SK-N-SH (cell line): ENCODE measurements at regions of chr7 and their contacts with region 1.

Region 1: GRCh38 chr7:786472-787255 is 45.6 kb upstream of the SUN1 start:
- DNase-seq: peak; percentile 95
- H3K4me3 ChIP-seq: no peak overlapping the region
- H3K27ac ChIP-seq: no peak overlapping the region
- H3K4me1 ChIP-seq: no peaks in the 10 kb centered on the region; a peak in 1 of 4 replicates
- H3K27me3 ChIP-seq: no peaks in the 10 kb centered on the region
- CTCF ChIP-seq: peak; percentile 98
- EP300 ChIP-seq: no peak
- RAD21 ChIP-seq: peak; percentile 92

Region 2: DNA sequence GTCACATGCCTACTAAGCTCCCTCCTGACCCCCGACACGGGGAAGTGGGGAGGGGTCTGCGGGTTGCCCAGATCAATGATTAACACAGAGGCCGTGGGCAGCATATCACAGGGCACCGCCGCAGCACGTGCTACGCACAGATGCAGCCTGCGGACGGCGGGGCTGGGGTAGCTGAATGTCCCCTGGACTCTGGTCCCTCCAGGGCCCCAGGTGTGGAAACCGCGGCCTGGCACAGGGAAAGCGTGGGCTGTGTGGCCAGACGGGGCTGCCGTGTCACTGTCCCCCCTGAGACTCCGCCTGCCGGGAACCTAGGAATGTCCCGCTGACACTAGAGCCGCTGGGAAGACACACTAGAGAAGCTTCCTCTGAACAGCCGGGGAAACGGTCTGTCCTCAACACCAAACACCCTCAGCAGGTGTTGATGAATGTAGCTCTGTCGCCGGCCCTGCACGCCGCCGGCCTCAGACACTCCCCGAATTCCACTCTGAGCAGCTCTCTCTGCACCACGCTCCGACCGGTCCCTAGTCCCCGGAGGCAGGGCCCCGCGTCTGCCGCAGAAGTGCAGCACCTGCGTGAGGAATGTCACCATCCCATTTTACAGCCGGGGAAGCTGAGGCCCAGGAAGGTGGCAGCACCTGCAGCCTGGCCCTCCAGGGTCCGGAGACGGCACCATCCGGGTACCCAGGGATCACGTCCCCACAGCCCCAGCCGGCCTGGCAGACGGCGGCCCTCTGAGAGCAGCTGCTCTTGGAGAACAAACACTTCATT is 233.6 kb before region 1 on chr7:
- CTCF ChIA-PET with region 1: no interaction called
- POLR2A ChIA-PET with region 1: no interaction called
- DNase-seq: no peak
- H3K4me3 ChIP-seq: no peak overlapping the region
- H3K27ac ChIP-seq: no peak overlapping the region
- H3K4me1 ChIP-seq: no peaks in the 10 kb centered on the region
- H3K27me3 ChIP-seq: no peaks in the 10 kb centered on the region
- CTCF ChIP-seq: no peak
- EP300 ChIP-seq: no peak
- RAD21 ChIP-seq: no peak

Region 3: DNA sequence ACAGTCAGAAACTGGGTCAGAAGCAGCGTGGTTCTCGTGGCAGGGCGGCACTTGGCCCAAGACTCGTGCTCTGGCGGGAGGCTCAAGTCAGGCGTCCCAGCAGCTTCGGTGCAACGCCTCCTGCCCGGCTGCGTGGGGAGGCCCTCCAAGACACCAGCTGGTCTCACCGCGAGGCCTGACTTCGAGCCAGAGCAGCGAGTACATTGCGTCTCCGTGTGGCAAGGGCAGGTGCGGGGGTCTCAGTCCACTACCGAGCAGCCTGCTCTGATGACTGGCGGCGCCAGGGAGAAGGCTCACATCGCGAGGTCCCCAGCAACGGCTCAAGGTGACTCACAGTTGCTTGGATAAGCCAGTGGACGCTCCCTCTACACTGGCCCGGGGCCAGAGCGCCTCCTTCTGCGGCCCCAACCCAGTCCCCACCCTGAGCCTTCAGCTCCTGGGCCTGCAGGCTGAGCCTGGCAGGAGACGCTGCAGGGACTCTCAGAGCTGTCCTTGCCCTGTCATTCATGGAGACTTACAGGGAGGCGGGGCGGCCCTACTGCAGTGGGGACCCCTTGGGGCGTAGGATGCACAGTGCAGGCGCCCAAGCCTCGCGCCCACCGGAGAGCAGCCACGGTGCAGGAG is 17.7 kb before region 1 on chr7:
- CTCF ChIA-PET with region 1: interaction called, 48 read pairs
- POLR2A ChIA-PET with region 1: no interaction called
- DNase-seq: peak; percentile 78
- H3K4me3 ChIP-seq: peak overlapping the region; percentile 52 to 55
- H3K27ac ChIP-seq: peak overlapping the region; percentile 90 to 98
- H3K4me1 ChIP-seq: peaks cover 21 to 45% of the 10 kb centered on the region in 2 experiments
- H3K27me3 ChIP-seq: no peaks in the 10 kb centered on the region
- CTCF ChIP-seq: peak; percentile 39
- EP300 ChIP-seq: no peak
- RAD21 ChIP-seq: peak; percentile 11; the same call in 1 of the 2 replicates

Region 4: DNA sequence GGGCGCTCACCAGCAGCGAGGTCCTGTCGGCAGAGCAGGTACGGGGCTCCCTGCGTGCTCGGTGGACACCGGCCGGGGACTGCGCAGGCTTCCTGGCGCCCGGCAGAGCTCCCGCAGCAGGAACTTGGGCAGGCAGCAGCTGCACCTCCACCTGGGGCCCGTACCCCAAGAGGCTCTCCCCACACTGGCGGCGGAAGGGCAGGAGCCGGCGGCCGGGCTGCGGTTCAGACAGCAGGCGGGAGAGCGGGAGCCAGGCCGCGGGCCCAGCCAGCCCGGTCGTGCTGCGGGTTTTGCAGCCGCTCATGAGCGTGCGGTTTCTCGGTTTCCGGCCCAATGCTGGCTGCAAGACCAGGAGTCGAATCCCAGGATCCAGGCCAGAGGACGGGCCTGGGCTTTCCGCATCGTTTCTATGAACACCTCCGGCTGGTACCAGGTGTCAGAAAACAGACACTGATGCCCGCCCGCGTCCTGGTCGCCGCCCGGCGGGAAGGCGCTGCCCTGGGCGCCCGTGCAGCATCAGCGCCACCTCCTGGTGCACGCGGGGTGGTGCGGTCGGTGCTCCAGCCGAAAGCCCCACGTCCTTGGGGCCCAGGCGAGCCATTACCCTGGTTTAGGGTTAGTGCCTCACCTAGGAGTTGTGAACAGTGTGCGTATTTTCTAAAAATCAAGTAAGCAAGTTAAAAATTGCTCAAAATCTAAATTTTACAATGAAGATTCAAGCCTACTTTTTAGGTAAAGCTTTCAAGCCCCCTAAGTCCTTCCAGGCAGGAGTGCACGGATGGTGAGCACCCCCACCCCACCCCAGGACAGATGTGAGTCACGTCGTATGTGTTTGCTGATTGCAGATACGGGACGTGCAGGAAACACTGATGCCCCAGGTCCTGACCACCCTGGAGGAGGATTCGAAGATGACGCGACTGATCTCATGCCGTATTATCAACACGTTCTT is 12.2 kb before region 1 on chr7:
- CTCF ChIA-PET with region 1: interaction called, 48 read pairs
- POLR2A ChIA-PET with region 1: no interaction called
- DNase-seq: peak; percentile 93
- H3K4me3 ChIP-seq: no peak overlapping the region
- H3K27ac ChIP-seq: no peak overlapping the region
- H3K4me1 ChIP-seq: peaks cover 40 to 48% of the 10 kb centered on the region in 2 experiments
- H3K27me3 ChIP-seq: no peaks in the 10 kb centered on the region
- CTCF ChIP-seq: peak; percentile 99
- EP300 ChIP-seq: no peak
- RAD21 ChIP-seq: peak; percentile 81

Region 5: DNA sequence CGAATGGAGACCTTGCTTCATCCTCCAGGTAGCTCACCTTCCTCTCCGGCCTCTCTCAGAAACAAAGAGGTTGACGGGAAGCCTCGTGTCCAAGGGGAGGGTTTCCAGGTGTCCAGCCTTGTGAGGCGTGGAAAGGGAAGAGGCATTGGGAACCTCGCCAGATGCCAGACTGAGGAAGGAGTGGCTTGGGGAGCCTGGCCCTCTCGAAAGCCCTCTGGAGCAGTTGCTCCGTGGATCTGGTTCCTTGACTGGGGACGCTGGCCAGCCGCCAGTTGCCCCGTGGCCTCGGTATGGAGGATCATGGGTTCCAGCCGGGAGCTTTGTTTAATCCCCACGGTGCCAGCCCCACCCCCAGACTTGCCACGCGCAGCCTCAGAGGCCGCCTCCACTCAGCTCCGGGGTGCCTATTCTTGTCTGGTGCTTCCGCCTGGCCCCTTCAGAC is 15.3 kb after region 1 on chr7:
- CTCF ChIA-PET with region 1: interaction called, 10 read pairs
- POLR2A ChIA-PET with region 1: no interaction called
- DNase-seq: peak; percentile 72
- H3K4me3 ChIP-seq: no peak overlapping the region
- H3K27ac ChIP-seq: no peak overlapping the region; a peak in 1 of 4 replicates
- H3K4me1 ChIP-seq: peaks cover 0 to 4% of the 10 kb centered on the region in 2 experiments; a peak in 1 of 4 replicates
- H3K27me3 ChIP-seq: no peaks in the 10 kb centered on the region
- CTCF ChIP-seq: no peak
- EP300 ChIP-seq: no peak
- RAD21 ChIP-seq: no peak

Region 6: DNA sequence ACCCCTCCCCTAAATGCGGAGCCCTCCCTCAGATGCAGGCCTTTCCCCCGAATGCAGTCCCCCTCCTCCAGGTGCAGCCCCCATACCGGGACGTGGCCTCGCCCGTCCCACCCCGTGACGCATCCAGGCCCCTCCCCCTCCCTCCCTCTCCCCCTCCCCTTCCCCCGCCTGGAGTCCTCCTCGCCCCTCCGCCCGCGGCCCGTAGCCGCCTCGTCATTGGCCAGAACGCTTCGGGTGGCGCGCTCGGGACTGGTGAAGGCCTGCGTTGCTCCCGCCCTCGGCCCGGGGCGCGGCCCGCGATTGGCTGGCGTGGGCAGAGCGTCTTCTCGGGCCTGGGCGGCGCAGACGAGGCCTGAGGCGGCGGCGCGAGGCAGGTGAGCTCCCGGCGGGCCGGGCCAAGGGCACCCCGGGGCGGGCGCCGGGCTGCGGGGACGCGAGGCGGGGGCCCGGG is 29.7 kb after region 1 on chr7:
- CTCF ChIA-PET with region 1: interaction called, 10 read pairs
- POLR2A ChIA-PET with region 1: no interaction called
- DNase-seq: peak; percentile 100
- H3K4me3 ChIP-seq: peak overlapping the region; percentile 55; a peak in 3 of 4 replicates
- H3K27ac ChIP-seq: peak overlapping the region in 1 of 2 experiments; percentile 83; a peak in 1 of 4 replicates
- H3K4me1 ChIP-seq: peaks cover 14 to 28% of the 10 kb centered on the region in 2 experiments
- H3K27me3 ChIP-seq: no peaks in the 10 kb centered on the region
- CTCF ChIP-seq: no peak
- EP300 ChIP-seq: no peak
- RAD21 ChIP-seq: no peak

Region 7: GRCh38 chr7:859359-860030 is 72.8 kb after region 1 on chr7:
- CTCF ChIA-PET with region 1: interaction called, 10 read pairs
- POLR2A ChIA-PET with region 1: no interaction called
- DNase-seq: no peak
- H3K4me3 ChIP-seq: no peak overlapping the region
- H3K27ac ChIP-seq: peak overlapping the region in 1 of 2 experiments; percentile 3; a peak in 1 of 4 replicates
- H3K4me1 ChIP-seq: peaks cover 0 to 19% of the 10 kb centered on the region in 2 experiments; a peak in 1 of 4 replicates
- H3K27me3 ChIP-seq: no peaks in the 10 kb centered on the region
- CTCF ChIP-seq: no peak
- EP300 ChIP-seq: no peak
- RAD21 ChIP-seq: no peak